ENCODE measurements at regions of chr22 and their contacts with region 1.

Region 1: GRCh38 chr22:39319270-39320022 is at the start of gene RPL3:
- DNase-seq: peak; percentile 94 to 96
- H3K4me3 ChIP-seq: peak within 1 kb of the TSS; percentile 94
- H3K27ac ChIP-seq: peak within 1 kb of the TSS; percentile 98
- H3K4me1 ChIP-seq: peaks cover 24% of the 10 kb centered on the region
- H3K27me3 ChIP-seq: no peaks in the 10 kb centered on the region
- CTCF ChIP-seq: no peak; the same call in 1 of the 2 replicates
- total RNA-seq, gene RPL3: 1,699 and 2,252 TPM in 2 replicates

Region 2: GRCh38 chr22:38921119-38921518 is 398.3 kb before region 1 on chr22:
- CTCF ChIA-PET with region 1: no interaction called
- POLR2A ChIA-PET with region 1: interaction called, 10 read pairs
- intact Hi-C with region 1: no loop called
- DNase-seq: peak; percentile 93 to 94
- H3K4me3 ChIP-seq: no peak overlapping the region
- H3K27ac ChIP-seq: peak overlapping the region; percentile 38
- H3K4me1 ChIP-seq: peaks cover 57% of the 10 kb centered on the region
- H3K27me3 ChIP-seq: peaks cover 13% of the 10 kb centered on the region; the same call in 1 of the 2 replicates
- CTCF ChIP-seq: no peak

Region 3: GRCh38 chr22:39170825-39171622 is 148.4 kb before region 1 on chr22:
- CTCF ChIA-PET with region 1: interaction called, 11 read pairs
- POLR2A ChIA-PET with region 1: interaction called, 28 read pairs
- intact Hi-C with region 1: loop called (anchors 1 kb)
- DNase-seq: peak; percentile 53 to 91
- H3K4me3 ChIP-seq: no peak overlapping the region
- H3K27ac ChIP-seq: no peak overlapping the region
- H3K4me1 ChIP-seq: peaks cover 50% of the 10 kb centered on the region
- H3K27me3 ChIP-seq: no peaks in the 10 kb centered on the region
- CTCF ChIP-seq: peak; percentile 100

Region 4: GRCh38 chr22:39343259-39344048 is 24.0 kb after region 1 on chr22:
- CTCF ChIA-PET with region 1: interaction called, 3 read pairs
- POLR2A ChIA-PET with region 1: interaction called, 36 read pairs
- intact Hi-C with region 1: no loop called
- DNase-seq: peak; percentile 69 to 72
- H3K4me3 ChIP-seq: no peak overlapping the region
- H3K27ac ChIP-seq: no peak overlapping the region
- H3K4me1 ChIP-seq: peaks cover 16% of the 10 kb centered on the region
- H3K27me3 ChIP-seq: no peaks in the 10 kb centered on the region
- CTCF ChIP-seq: peak; percentile 83

Region 5: GRCh38 chr22:39502109-39502788 is 182.8 kb after region 1 on chr22 and contains the start of gene MIEF1:
- CTCF ChIA-PET with region 1: no interaction called
- POLR2A ChIA-PET with region 1: interaction called, 13 read pairs
- intact Hi-C with region 1: no loop called
- DNase-seq: peak; percentile 94 to 97
- H3K4me3 ChIP-seq: peak within 1 kb of the TSS; percentile 92
- H3K27ac ChIP-seq: peak within 1 kb of the TSS; percentile 20; the same call in 1 of the 2 replicates
- H3K4me1 ChIP-seq: peaks cover 28% of the 10 kb centered on the region
- H3K27me3 ChIP-seq: no peaks in the 10 kb centered on the region
- CTCF ChIP-seq: no peak
- total RNA-seq, gene MIEF1: 36.9 TPM in 2 replicates

Region 6: DNA sequence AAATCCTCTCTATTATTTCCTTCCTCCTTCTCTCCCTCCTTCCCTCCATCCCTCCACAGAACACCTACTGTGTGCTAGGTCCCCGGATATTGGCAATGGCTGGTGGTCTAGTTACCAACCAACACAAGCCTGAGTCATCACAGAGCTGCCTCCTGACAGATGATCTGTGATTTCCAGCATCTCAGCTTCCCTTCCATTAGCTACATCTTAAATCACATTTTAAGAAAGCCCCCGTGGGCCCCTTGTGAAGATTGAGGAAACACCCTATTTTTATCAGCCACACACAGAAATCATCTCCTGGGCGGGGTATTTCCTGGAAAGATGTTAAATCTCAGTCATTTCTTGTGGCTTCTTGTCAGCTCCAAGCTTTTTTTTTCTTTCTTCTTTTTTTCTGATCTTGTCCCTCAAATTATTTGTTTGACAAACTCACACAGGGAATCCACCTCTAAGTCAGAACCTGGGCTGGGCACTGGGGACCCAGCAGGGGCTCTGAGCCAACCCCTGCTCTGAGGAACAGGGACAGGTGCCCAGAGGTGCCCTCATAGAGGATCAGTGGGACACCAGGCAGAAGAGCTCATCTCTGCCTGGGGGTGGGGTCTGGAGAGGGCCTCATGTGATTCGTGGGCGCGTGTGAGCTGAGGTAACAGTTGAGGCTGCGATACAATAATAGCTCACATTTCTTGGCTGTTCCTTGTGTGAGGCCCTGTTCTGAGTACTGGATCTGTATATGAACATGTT is 293.5 kb after region 1 on chr22:
- CTCF ChIA-PET with region 1: no interaction called
- POLR2A ChIA-PET with region 1: no interaction called
- intact Hi-C with region 1: no loop called
- DNase-seq: no peak
- H3K4me3 ChIP-seq: no peak overlapping the region
- H3K27ac ChIP-seq: no peak overlapping the region
- H3K4me1 ChIP-seq: no peaks in the 10 kb centered on the region
- H3K27me3 ChIP-seq: peaks cover 11% of the 10 kb centered on the region; the same call in 1 of the 2 replicates
- CTCF ChIP-seq: no peak

Region 7: DNA sequence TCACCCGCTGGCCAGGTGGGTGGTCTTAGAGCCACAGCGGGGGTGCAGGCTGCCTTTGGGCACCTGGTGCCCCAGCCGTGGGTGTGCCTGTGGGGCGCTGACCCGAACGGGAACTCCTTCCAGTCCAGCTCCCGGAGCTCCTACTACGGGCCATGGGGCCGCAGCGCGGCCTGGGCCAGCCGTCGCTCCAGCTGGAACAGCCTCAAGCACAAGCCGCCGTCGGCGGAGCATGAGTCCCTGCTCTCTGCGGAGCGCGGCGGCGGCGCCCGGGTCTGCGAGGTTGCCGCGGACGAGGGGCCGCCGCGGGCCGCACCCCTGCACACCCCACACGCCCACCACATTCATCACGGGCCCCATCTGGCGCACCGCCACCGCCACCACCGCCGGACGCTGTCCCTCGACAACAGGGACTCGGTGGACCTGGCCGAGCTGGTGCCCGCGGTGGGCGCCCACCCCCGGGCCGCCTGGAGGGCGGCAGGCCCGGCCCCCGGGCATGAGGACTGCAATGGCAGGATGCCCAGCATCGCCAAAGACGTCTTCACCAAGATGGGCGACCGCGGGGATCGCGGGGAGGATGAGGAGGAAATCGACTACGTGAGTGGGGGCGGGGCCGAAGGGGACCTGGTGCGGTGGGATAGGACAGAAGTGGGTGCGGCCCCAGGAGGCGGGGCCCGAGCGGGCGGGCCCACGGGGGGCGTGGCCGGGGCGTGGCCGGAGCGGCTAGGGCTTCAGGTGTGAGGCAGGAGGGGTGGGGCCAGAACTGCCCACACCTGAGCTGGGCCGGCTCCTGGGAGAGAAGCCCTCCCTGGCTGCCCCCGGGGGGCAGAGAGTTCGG is 342.6 kb after region 1 on chr22:
- CTCF ChIA-PET with region 1: no interaction called
- POLR2A ChIA-PET with region 1: interaction called, 16 read pairs
- intact Hi-C with region 1: no loop called
- DNase-seq: peak in 1 of 2 experiments; percentile 60
- H3K4me3 ChIP-seq: no peak overlapping the region
- H3K27ac ChIP-seq: no peak overlapping the region
- H3K4me1 ChIP-seq: peaks cover 35% of the 10 kb centered on the region
- H3K27me3 ChIP-seq: no peaks in the 10 kb centered on the region
- CTCF ChIP-seq: no peak